Lower leg skin (tissue), 4 donors: ENCODE measurements at regions of chr7 and their contacts with region 1.

Region 1: GRCh38 chr7:1925349-1925748 is 255.3 kb downstream of the ELFN1 start:
- DNase-seq: no peak
- H3K4me3 ChIP-seq: no peak overlapping the region
- CTCF ChIP-seq: no peak
- POLR2A ChIP-seq: no peak

Region 2: DNA sequence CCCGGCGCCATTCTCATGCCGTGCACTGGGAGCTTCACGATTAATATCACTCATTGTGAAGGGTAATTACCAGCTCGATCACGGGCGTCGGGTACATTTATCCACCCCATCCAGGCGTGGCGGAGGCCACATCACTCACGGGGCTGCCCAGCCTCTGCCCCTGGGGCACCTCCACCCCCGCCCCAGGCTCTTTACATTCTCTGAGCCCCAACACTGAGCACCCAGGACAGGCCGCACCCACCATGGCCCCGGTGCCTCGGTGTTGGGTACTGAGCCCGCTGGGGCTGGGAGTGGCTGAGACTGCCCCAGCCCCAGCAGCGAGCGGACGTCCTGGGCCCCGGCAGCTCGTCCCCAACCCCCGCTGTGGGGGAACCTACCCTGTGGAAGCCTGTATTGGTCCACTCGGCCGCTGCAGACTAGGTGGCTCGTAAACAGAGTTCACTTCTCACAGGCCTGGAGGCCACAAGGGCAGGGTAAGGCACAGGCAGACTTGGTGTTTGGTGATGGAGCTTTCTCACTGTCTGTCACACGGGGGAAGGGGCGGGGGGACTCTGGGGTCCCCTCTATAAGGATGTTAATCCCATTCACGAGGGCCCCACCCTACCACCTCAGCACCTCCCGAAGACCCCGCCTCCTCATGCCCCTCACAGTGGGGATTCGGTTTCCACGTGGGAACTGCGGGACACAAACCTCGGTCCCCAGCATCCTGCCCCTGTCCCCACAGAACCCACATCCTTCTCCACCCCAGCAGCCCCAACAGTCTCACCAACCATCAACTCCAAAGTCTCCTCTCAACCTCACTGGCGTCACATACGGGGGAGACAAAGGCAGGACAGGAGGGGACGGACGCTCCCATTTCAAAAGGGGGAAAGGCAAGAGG is 71.1 kb before region 1 on chr7:
- intact Hi-C with region 1: no loop called
- DNase-seq: peak in 1 of 2 donors; percentile 80
- H3K4me3 ChIP-seq: no peak overlapping the region
- CTCF ChIP-seq: no peak
- POLR2A ChIP-seq: no peak

Region 3: GRCh38 chr7:2172311-2173188 is 247.2 kb after region 1 on chr7:
- intact Hi-C with region 1: no loop called
- DNase-seq: no peak
- H3K4me3 ChIP-seq: no peak overlapping the region
- CTCF ChIP-seq: no peak
- POLR2A ChIP-seq: no peak

Region 4: DNA sequence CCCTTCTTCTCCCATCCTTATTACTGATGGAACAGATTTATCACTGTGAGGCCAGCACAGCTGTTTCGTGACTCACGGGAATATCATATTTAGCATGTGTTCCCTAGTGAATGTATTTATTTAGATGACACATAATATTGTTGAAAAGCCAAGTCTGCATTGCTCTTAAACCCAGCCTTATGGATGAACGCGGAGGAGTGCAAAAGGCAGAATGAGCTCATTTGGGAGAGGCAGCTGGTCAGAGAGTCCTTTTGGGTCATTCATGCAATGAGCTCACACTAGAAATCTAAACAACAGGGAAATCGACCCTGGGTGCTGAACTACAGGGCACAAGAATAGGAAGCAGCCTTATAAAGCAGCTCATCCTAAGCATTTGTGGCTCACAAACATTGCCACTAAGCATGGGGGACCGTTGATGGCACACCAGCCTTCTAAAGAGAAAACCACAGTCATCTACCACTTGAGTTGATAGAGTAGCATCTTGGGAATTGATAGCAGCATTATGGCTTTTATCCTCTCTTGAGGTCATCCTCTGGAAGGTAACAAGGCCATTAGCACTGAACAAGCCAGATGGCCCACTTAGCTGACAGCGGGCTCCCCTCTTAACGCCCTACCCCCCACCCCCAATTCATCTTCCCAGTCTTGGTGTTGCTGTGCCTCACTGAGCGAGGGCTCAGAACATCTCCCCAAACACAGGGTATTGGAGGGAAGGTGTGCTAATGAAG is 1342.8 kb after region 1 on chr7:
- intact Hi-C with region 1: loop called (anchors 5 kb)
- DNase-seq: no peak
- H3K4me3 ChIP-seq: no peak overlapping the region
- CTCF ChIP-seq: no peak
- POLR2A ChIP-seq: no peak